ENCODE measurements at regions of chr12 and their contacts with region 1.

Region 1: GRCh38 chr12:50825372-50825838 is 17.3 kb upstream of the TMPRSS12 start:
- DNase-seq: no peak
- ATAC-seq: peak; percentile 61
- H3K4me3 Mint-ChIP-seq: no peak overlapping the region
- H3K27ac Mint-ChIP-seq: peak overlapping the region; percentile 35
- H3K4me1 Mint-ChIP-seq: peaks cover 6% of the 10 kb centered on the region
- H3K27me3 Mint-ChIP-seq: no peaks in the 10 kb centered on the region

Region 2: GRCh38 chr12:50246873-50247612 is 578.4 kb before region 1 on chr12:
- CTCF ChIA-PET with region 1: no interaction called
- POLR2A ChIA-PET with region 1: no interaction called
- intact Hi-C with region 1: no loop called
- DNase-seq: peak; percentile 63
- ATAC-seq: peak; percentile 82
- H3K4me3 Mint-ChIP-seq: peak overlapping the region; percentile 70
- H3K27ac Mint-ChIP-seq: peak overlapping the region; percentile 88
- H3K4me1 Mint-ChIP-seq: peaks cover 60% of the 10 kb centered on the region
- H3K27me3 Mint-ChIP-seq: no peaks in the 10 kb centered on the region

Region 3: GRCh38 chr12:50734409-50735263 is 90.8 kb before region 1 on chr12:
- CTCF ChIA-PET with region 1: no interaction called
- POLR2A ChIA-PET with region 1: no interaction called
- intact Hi-C with region 1: no loop called
- DNase-seq: peak; percentile 34
- ATAC-seq: peak; percentile 51
- H3K4me3 Mint-ChIP-seq: no peak overlapping the region
- H3K27ac Mint-ChIP-seq: no peak overlapping the region
- H3K4me1 Mint-ChIP-seq: no peaks in the 10 kb centered on the region
- H3K27me3 Mint-ChIP-seq: no peaks in the 10 kb centered on the region

Region 4: DNA sequence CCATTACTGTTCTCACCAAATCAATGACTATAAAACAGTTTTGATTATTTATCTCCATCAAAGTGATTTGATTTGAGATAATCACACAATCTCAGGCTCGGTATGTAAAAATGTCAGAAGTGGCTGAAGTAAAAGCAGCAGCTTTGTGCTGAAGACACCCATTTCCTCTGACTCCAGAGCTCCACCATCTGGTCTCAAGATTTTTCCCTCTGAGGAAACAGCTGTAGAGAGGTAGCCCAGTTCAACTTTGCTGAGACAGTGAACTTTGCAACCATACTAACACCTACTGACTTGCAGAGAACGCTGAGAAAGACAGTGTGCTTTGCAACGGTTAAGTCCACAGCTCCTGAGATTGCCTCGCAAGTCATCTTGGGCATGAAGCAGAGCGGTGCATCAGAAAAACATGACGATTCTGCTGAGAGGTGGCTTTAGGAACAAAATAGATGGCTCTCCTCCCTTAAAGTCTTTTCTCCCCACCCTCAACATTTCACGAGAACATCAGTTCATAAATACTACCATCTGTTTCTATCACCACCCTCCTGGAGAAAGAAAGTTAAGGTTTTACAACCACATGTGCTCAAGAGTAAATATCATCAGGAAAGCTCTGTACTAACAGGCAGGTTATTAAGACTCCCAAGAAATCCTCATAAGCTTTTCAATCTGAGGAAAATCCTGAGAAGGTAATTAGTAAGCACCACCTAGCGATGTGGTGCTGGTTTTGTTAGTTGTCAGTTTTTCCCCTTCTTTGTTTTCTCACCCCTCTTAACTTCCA is 161.7 kb after region 1 on chr12:
- CTCF ChIA-PET with region 1: interaction called, 29 read pairs
- POLR2A ChIA-PET with region 1: no interaction called
- intact Hi-C with region 1: loop called (anchors 1 to 2 kb)
- DNase-seq: peak; percentile 46
- ATAC-seq: peak; percentile 60
- H3K4me3 Mint-ChIP-seq: no peak overlapping the region
- H3K27ac Mint-ChIP-seq: peak overlapping the region; percentile 38
- H3K4me1 Mint-ChIP-seq: peaks cover 57% of the 10 kb centered on the region
- H3K27me3 Mint-ChIP-seq: no peaks in the 10 kb centered on the region

Region 5: DNA sequence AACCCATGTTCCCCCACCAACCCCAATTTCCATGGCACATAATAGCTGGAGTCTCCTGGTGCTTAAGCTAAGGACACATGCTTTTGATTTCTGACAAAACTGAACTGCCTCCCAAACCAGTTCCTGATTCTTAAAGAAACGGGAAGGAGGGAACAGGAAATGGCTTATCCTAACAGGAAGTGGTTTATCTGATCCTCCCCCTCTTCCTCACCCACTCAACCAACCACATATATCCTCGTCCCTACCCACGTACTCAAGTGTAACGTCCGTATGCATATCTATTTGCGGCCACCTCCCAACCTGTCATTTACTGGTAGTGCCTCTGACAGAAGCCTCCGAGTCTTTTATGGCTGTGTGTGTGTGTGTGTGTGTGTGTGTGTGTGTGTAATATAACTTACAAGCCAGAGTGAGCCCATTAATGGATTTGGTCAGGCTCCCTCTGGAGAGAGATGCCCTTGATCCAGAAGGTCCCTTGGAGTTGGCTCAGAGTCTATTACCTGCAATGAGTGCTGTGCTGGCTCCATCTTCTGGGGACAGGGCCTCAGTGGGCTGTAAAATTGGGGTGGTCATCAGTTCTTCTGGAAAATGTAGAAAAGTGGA is 420.9 kb after region 1 on chr12:
- CTCF ChIA-PET with region 1: no interaction called
- POLR2A ChIA-PET with region 1: no interaction called
- intact Hi-C with region 1: loop called in 1 of 2 experiments (anchors 10 kb)
- DNase-seq: peak; percentile 58
- ATAC-seq: peak; percentile 74
- H3K4me3 Mint-ChIP-seq: peak overlapping the region; percentile 36
- H3K27ac Mint-ChIP-seq: peak overlapping the region; percentile 74
- H3K4me1 Mint-ChIP-seq: peaks cover 49% of the 10 kb centered on the region
- H3K27me3 Mint-ChIP-seq: no peaks in the 10 kb centered on the region

Measured in activated CD4-positive, alpha-beta T cell treated with anti-CD3 and anti-CD28 coated beads for 36 hours (primary cell).